ENCODE measurements at regions of chr16 and their contacts with region 1.

Region 1: DNA sequence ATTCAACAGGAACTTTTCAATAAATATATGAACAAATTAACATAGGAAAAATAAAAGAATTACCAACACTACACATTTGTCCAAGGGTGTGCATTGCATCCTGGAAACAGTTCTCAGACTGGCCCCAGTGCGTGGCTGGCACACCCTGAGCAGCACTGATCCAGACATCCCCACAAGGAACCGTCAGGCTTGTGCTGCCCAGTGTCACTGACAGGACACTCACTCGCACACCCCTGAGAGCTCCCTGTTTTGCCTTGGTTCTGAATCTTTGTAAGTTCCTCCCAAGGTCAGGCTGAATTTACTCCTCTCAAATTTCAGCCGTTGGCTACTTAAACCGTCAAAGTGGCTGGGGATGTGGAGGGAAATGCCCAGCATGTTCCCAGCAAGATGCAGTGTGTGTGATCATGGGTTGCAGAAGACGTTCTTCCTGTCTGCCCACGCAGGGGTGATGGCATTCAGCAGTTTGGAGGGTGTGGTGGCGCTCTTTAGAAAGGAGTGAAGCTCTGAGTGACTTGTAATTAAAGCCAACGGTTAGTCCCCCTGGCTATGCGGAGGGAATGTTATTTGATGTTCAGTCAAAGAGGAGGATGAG is 1.7 kb downstream of the MT2A start:
- DNase-seq: peak; percentile 70
- H3K27ac ChIP-seq: peak overlapping the region; percentile 100
- CTCF ChIP-seq: no peak

Region 2: DNA sequence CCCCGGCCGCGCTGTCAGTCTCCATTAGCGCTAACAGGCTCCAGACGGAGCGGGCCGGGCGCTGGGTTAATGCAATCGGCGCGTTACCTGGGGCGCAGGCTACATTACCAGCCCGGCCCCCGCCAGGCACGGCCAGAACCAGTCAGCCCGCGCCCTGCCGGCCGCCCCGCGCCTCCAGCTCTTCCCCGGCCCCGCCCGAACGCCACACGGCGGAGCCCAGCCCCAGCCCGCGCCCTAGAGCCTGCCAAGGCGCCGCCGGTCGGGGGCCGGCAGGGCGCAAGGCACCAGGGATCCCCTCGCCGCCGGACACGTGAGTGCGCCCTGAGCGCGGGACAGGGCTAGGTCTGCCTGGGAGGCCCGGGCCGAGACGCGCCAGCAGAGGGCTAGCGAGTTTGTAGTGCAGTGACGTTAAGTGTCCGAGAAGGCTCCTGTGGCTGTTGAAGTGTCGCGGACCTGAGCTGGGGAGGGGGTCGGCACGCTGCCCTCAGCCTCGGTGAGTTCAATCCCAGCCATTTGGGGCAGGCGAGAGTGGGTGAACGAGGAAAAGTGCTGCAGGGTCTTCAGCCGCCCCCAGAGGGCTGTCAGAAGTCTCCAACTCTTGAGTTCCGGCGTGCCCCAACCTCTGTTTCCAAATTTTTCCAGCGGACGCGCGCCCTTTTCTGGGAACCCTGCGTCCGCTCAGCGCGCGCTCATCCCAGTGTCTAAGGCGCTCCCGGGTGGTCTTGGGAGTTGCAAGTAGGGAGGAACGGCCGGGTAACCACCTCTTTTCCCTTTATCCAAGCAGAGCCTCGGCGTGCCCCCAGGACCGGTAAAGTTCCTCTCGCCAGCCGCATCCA is 954.0 kb before region 1 on chr16 and contains the start of gene SLC6A2:
- CTCF ChIA-PET with region 1: no interaction called
- POLR2A ChIA-PET with region 1: no interaction called
- DNase-seq: peak; percentile 19
- H3K27ac ChIP-seq: no peak within 1 kb of the TSS
- CTCF ChIP-seq: no peak

Region 3: DNA sequence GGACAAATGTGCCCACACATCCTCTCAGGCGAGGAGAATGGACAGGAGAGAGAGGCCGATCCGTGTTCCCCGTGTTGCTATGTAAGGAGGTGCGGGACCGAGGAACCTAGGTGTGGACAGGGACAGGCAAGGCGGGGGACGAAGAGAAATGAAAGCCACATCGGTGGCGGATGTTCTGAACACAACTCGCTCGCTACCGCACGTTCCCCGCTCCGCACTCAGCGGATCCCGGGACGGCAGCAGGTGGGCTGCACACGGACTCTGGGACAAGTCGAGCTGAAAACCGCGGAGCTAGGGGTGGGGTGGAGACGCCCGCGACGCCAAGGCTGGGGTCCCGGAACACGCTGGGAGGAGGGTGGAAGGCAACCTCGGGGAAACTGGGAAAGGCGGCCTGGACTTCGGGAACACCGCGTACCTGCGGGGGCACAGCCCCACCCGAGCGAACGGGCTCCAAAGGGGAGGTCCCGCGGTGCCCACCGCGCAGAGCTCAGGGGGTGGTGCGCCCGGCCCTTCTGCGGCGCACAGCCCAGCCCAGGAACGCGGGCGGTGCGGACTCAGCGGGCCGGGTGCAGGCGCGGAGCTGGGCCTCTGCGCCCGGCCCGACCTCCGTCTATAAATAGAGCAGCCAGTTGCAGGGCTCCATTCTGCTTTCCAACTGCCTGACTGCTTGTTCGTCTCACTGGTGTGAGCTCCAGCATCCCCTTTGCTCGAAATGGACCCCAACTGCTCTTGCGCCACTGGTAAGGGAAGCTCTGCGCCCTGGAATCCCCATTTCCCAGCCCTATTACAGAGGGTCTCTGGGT is 15.2 kb after region 1 on chr16 and contains the start of gene MT1E:
- CTCF ChIA-PET with region 1: interaction called, 3 read pairs
- POLR2A ChIA-PET with region 1: interaction called, 14 read pairs
- DNase-seq: peak; percentile 71
- H3K27ac ChIP-seq: peak within 1 kb of the TSS; percentile 90
- CTCF ChIP-seq: no peak

Region 4: DNA sequence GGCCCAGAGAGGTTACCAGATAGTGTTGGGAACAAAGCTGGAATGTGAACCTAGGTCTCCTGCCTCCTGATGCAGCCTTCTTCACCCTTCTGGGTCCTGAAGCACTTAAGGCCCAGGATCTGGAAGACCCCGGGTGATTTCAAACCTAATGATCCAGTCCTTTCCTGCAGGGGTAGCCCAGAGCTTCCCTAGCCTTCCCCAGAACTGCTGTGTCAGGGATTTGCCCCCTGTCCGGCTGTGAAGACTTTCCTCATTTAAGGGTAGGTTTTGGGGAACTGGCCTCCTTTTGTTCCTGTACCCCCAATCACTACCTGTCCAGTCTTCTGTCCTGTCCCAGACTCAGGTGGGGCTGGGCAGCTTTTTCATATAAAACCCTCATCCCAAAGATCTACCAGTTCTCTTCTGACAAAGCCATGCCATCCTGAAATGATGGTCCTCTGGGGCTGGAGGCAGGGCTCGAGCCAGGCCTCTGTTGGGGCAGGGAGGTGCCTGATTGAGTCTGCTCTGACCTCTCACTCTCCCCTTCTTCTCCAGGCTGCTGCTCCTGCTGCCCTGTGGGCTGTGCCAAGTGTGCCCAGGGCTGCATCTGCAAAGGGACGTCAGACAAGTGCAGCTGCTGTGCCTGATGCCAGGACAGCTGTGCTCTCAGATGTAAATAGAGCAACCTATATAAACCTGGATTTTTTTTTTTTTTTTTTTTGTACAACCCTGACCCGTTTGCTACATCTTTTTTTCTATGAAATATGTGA is 73.5 kb after region 1 on chr16:
- CTCF ChIA-PET with region 1: no interaction called
- POLR2A ChIA-PET with region 1: interaction called, 10 read pairs
- DNase-seq: no peak
- H3K27ac ChIP-seq: peak overlapping the region; percentile 99
- CTCF ChIP-seq: no peak

Measured in RWPE1 (cell line).